Activated CD8-positive, alpha-beta T cell treated with anti-CD3 and anti-CD28 coated beads, Interleukin-2, amount 10 ng/mL, durations not matched to agents 7 days and 5 days (primary cell): ENCODE measurements at regions of chr5 and their contacts with region 1.

Region 1: DNA sequence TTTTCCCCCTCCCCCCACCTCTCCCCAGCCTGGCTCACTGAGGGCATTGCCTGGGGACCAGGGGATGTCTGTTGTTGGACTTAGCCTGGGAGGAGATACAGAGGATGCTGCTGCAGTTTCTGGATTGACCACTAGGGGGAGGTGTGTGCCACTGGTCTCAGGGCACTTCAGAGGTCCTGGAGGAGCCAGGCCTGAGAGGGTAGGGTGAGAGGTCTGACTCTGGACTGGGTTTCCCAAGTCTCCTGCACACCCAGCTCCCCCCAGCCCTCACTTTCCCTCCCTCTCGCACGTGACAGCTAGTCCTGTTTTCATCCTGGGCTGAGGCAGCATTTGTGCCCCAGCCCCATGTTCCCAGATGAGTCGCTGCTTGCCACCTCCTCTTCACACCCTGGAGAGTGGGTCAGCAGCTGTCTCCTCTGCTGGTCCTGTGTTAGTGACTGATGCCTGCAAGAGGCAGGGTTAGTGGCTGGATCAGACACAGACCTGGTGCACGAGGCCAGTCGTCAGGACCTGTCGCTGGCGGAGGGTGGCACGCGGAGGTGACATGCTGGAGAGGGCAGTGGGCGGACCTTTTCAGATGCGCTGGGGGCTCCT is 4.4 kb downstream of the IL3 start:
- DNase-seq: peak; percentile 90
- ATAC-seq: peak; percentile 73
- H3K4me3 Mint-ChIP-seq: no peak overlapping the region
- H3K27ac Mint-ChIP-seq: peak overlapping the region; percentile 57
- H3K4me1 Mint-ChIP-seq: peaks cover 56% of the 10 kb centered on the region
- H3K27me3 Mint-ChIP-seq: no peaks in the 10 kb centered on the region

Region 2: GRCh38 chr5:131810510-131811249 is 254.2 kb before region 1 on chr5:
- CTCF ChIA-PET with region 1: interaction called, 17 read pairs
- POLR2A ChIA-PET with region 1: no interaction called
- DNase-seq: peak; percentile 42
- ATAC-seq: no peak
- H3K4me3 Mint-ChIP-seq: no peak overlapping the region
- H3K27ac Mint-ChIP-seq: no peak overlapping the region
- H3K4me1 Mint-ChIP-seq: no peaks in the 10 kb centered on the region
- H3K27me3 Mint-ChIP-seq: peaks cover 8% of the 10 kb centered on the region

Region 3: GRCh38 chr5:132033122-132033521 is 31.7 kb before region 1 on chr5:
- CTCF ChIA-PET with region 1: no interaction called
- POLR2A ChIA-PET with region 1: no interaction called
- DNase-seq: no peak
- ATAC-seq: no peak
- H3K4me3 Mint-ChIP-seq: no peak overlapping the region
- H3K27ac Mint-ChIP-seq: no peak overlapping the region
- H3K4me1 Mint-ChIP-seq: no peaks in the 10 kb centered on the region
- H3K27me3 Mint-ChIP-seq: peaks cover 9% of the 10 kb centered on the region

Region 4: DNA sequence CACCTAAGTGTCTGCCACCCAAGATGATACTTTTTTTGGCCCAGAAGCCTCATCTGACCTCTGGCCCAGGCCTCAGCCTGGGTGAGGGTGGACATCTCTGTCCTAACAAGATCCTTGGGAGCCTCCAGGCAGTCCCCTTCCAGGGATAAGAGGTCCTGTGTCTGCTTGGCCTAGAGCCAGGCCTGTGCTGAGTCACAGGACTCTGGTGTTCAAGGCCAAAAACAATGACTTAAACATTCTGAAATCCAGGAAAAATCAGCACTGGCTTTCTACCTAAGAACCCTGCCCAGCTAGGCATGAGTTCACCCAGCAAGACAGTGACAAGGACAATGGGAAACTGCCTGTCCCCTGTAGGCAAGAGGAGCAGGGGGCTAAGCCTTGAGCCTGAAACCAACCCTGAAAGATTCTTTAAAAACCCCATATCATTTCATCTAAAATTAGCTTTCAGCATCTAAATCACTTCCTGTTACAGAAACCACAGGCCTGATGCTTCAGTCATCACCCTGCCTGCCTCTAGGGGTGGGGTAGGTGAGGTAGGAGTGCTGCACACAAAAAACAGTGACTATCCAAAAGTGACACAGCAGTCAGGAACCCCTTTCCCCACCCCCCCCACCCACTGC is 38.6 kb after region 1 on chr5:
- CTCF ChIA-PET with region 1: interaction called, 18 read pairs
- POLR2A ChIA-PET with region 1: no interaction called
- DNase-seq: peak; percentile 87
- ATAC-seq: peak; percentile 82
- H3K4me3 Mint-ChIP-seq: peak overlapping the region; percentile 48
- H3K27ac Mint-ChIP-seq: peak overlapping the region; percentile 94
- H3K4me1 Mint-ChIP-seq: peaks cover 91% of the 10 kb centered on the region
- H3K27me3 Mint-ChIP-seq: no peaks in the 10 kb centered on the region

Region 5: DNA sequence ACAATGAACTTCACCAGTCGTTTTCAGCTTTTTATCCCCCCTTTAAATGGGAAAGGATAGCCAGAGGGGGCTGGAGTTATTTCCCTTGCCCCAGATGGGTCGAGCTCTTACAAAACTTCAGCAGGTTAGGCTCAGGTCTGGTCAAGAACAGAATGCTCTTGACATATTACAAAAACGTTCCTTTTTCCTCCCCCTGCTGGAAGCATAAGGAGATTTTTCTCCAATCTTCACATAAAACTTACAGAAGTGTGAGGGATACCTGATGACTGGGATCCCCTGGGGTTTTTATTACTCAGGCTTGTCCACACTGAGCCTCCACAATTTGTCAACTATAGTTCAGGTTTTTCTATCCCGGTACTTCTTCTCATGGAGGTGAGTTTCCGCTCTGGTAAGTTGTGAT is 69.5 kb after region 1 on chr5:
- CTCF ChIA-PET with region 1: interaction called, 14 read pairs
- POLR2A ChIA-PET with region 1: no interaction called
- DNase-seq: no peak
- ATAC-seq: no peak
- H3K4me3 Mint-ChIP-seq: no peak overlapping the region
- H3K27ac Mint-ChIP-seq: no peak overlapping the region
- H3K4me1 Mint-ChIP-seq: peaks cover 2% of the 10 kb centered on the region
- H3K27me3 Mint-ChIP-seq: peaks cover 21% of the 10 kb centered on the region

Region 6: GRCh38 chr5:132180134-132180745 is 115.4 kb after region 1 on chr5:
- CTCF ChIA-PET with region 1: interaction called, 15 read pairs
- POLR2A ChIA-PET with region 1: no interaction called
- DNase-seq: peak; percentile 35
- ATAC-seq: peak; percentile 37
- H3K4me3 Mint-ChIP-seq: no peak overlapping the region
- H3K27ac Mint-ChIP-seq: no peak overlapping the region
- H3K4me1 Mint-ChIP-seq: peaks cover 47% of the 10 kb centered on the region
- H3K27me3 Mint-ChIP-seq: no peaks in the 10 kb centered on the region

Region 7: GRCh38 chr5:132190161-132190817 is 125.5 kb after region 1 on chr5:
- CTCF ChIA-PET with region 1: interaction called, 13 read pairs
- POLR2A ChIA-PET with region 1: no interaction called
- DNase-seq: peak; percentile 32
- ATAC-seq: peak; percentile 87
- H3K4me3 Mint-ChIP-seq: no peak overlapping the region
- H3K27ac Mint-ChIP-seq: no peak overlapping the region
- H3K4me1 Mint-ChIP-seq: no peaks in the 10 kb centered on the region
- H3K27me3 Mint-ChIP-seq: peaks cover 12% of the 10 kb centered on the region